PC-9 (cell line): ENCODE measurements at regions of chr9 and their contacts with region 1.

Region 1: GRCh38 chr9:125200210-125201047 is at the start of gene RABEPK:
- DNase-seq: peak; percentile 83 to 96
- H3K4me3 ChIP-seq: peak within 1 kb of the TSS; percentile 65
- H3K27ac ChIP-seq: peak within 1 kb of the TSS; percentile 54
- H3K4me1 ChIP-seq: peaks cover 7% of the 10 kb centered on the region
- H3K27me3 ChIP-seq: no peaks in the 10 kb centered on the region
- CTCF ChIP-seq: no peak
- total RNA-seq, gene RABEPK: 28.9 and 29.7 TPM in 2 replicates

Region 2: GRCh38 chr9:125189361-125190289 is 10.8 kb before region 1 on chr9 and contains the start of gene PPP6C:
- CTCF ChIA-PET with region 1: no interaction called
- POLR2A ChIA-PET with region 1: no interaction called
- intact Hi-C with region 1: loop called (anchors 1 kb)
- DNase-seq: peak; percentile 83 to 97
- H3K4me3 ChIP-seq: peak within 1 kb of the TSS; percentile 99
- H3K27ac ChIP-seq: peak within 1 kb of the TSS; percentile 60
- H3K4me1 ChIP-seq: peaks cover 13% of the 10 kb centered on the region
- H3K27me3 ChIP-seq: no peaks in the 10 kb centered on the region
- CTCF ChIP-seq: peak; percentile 53; the same call in 1 of the 2 replicates
- total RNA-seq, gene PPP6C: 34.6 and 49.6 TPM in 2 replicates

Region 3: DNA sequence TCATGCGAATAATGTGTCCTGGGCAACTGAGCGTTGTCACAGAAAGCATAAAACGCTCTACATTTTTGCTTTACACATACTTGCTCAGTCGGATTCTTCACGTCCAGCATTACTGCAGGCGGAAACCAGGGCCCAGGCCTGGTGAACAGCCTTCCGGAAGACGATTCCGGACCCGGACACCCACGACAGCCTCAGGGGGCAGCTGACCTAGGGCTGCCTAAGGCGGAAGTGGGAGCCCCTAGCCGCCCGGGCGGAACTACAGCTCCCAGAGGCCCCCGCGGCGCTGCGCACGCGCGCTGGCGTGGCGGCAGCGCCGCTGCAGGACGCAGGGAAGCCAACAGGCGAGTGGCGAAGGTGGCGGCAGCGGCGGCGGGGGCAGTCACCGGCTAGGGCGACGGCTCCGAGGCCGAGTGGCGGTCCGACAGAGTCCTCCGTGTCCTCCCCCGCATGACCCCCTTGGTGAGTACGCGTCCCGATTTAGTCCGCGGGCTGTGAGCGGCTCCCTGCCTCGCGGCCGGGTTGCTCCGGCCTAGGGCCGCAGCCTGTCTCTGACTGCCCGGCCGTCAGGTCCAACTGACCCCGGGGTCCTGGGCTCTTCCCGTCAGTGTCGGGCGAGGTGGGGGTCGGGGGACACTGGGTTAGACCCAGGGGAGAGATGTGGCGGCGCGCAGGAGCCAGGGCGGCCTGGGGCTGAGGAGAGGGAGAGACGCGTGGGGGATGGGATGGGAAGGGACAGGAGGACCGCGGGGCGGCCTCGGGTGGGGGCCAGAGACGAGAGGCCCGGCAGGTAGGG is 61.3 kb after region 1 on chr9 and contains the start of gene GAPVD1:
- CTCF ChIA-PET with region 1: no interaction called
- POLR2A ChIA-PET with region 1: no interaction called
- intact Hi-C with region 1: no loop called
- DNase-seq: peak; percentile 88 to 95
- H3K4me3 ChIP-seq: peak within 1 kb of the TSS; percentile 78
- H3K27ac ChIP-seq: peak within 1 kb of the TSS; percentile 83
- H3K4me1 ChIP-seq: peaks cover 24% of the 10 kb centered on the region
- H3K27me3 ChIP-seq: no peaks in the 10 kb centered on the region
- CTCF ChIP-seq: no peak; the same call in 1 of the 2 replicates
- total RNA-seq, gene GAPVD1: 58.2 and 70.3 TPM in 2 replicates

Region 4: GRCh38 chr9:125296833-125297372 is 96.5 kb after region 1 on chr9:
- CTCF ChIA-PET with region 1: no interaction called
- POLR2A ChIA-PET with region 1: no interaction called
- intact Hi-C with region 1: loop called (anchors 1 kb)
- DNase-seq: peak; percentile 44 to 97
- H3K4me3 ChIP-seq: no peak overlapping the region
- H3K27ac ChIP-seq: peak overlapping the region; percentile 63
- H3K4me1 ChIP-seq: peaks cover 27% of the 10 kb centered on the region
- H3K27me3 ChIP-seq: no peaks in the 10 kb centered on the region
- CTCF ChIP-seq: no peak